Activated CD8-positive, alpha-beta T cell treated with anti-CD3 and anti-CD28 coated beads, Interleukin-2, amount 10 ng/mL, durations not matched to agents 7 days and 5 days (primary cell): ENCODE measurements at regions of chr14 and their contacts with region 1.

Region 1: DNA sequence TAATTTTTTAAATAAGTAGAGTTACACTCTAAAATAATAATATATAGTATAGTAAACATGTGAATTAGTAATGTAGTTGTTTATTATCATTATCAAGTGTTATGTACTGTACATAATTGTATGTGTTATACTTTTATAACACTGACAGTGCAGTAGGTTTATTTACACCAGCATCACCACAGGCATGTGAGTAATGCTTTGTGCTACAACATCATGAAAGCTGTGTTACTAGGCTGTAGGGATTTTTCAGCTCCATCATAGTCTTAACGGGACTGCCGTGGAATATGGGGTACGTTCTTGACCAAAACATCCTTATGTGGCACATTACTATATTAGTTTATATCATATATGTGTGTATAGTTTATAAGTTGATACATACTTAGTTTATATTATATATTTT is 8.6 kb downstream of the FNTB start:
- DNase-seq: no peak
- ATAC-seq: no peak
- H3K4me3 Mint-ChIP-seq: no peak overlapping the region
- H3K27ac Mint-ChIP-seq: no peak overlapping the region
- H3K4me1 Mint-ChIP-seq: peaks cover 26% of the 10 kb centered on the region
- H3K27me3 Mint-ChIP-seq: no peaks in the 10 kb centered on the region

Region 2: GRCh38 chr14:65019944-65020566 is 24.8 kb after region 1 on chr14:
- CTCF ChIA-PET with region 1: interaction called, 47 read pairs
- POLR2A ChIA-PET with region 1: interaction called, 3 read pairs
- DNase-seq: no peak
- ATAC-seq: peak; percentile 64
- H3K4me3 Mint-ChIP-seq: no peak overlapping the region
- H3K27ac Mint-ChIP-seq: no peak overlapping the region
- H3K4me1 Mint-ChIP-seq: no peaks in the 10 kb centered on the region
- H3K27me3 Mint-ChIP-seq: no peaks in the 10 kb centered on the region

Region 3: GRCh38 chr14:65134667-65135579 is 139.6 kb after region 1 on chr14:
- CTCF ChIA-PET with region 1: no interaction called
- POLR2A ChIA-PET with region 1: no interaction called
- DNase-seq: no peak
- ATAC-seq: peak; percentile 39
- H3K4me3 Mint-ChIP-seq: no peak overlapping the region
- H3K27ac Mint-ChIP-seq: no peak overlapping the region
- H3K4me1 Mint-ChIP-seq: peaks cover 5% of the 10 kb centered on the region
- H3K27me3 Mint-ChIP-seq: no peaks in the 10 kb centered on the region